Caco-2 (cell line): ENCODE measurements at regions of chr4 and their contacts with region 1.

Region 1: DNA sequence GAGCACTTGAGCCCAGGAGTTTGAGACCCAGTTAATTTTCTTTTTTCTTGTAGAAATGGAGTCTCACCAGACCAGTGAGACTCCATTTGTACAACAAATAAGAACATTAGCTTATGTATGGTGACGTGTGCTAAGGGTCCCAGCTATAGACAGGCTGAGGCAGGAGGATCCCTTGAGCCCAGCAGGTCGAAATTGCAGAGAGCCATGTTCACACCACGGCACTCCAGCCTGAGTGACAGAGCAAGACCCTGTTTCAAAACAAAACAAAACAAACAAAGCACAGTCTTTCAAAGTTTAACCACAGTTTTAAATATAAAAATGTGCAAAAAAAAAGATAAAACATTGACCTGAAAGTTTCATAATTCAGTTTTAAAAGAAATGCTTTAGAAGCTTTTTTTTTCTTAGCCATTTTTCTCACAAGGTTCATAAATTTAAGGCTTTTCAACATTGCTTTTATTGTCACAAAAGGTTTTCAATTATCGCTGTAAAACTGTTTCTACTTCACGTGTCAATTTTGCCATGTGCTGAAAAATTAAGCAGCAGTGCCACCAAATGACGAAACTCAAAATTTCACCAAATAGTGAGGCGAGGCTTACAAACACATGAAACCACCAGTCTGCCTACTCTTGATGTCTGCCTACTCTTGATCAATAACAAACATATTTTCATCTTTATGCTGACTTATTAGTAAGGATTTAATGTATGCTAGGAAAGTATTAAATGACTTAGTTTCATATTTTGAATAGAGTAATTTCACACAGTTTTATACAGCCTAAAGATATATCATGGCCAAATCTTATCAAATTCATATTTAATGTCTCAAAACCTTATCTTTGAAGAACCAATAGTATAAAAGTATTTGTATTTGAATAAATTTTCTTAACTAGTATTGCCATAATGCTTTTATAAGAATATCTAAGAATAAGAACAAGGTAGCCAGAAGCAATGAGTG is 126.3 kb downstream of the NEK1 start:
- DNase-seq: peak in 1 of 2 experiments; percentile 53
- H3K4me3 ChIP-seq: no peak overlapping the region
- H3K4me3 Mint-ChIP-seq: no peak overlapping the region
- H3K27ac Mint-ChIP-seq: no peak overlapping the region
- H3K4me1 ChIP-seq: 0 out of 2 replicates have a peak, but pooled peaks cover 4% of the 10 kb centered on the region
- H3K4me1 Mint-ChIP-seq: no peaks in the 10 kb centered on the region
- H3K27me3 ChIP-seq: no peaks in the 10 kb centered on the region
- H3K27me3 Mint-ChIP-seq: no peaks in the 10 kb centered on the region
- CTCF ChIP-seq: peak; percentile 34 to 42

Region 2: DNA sequence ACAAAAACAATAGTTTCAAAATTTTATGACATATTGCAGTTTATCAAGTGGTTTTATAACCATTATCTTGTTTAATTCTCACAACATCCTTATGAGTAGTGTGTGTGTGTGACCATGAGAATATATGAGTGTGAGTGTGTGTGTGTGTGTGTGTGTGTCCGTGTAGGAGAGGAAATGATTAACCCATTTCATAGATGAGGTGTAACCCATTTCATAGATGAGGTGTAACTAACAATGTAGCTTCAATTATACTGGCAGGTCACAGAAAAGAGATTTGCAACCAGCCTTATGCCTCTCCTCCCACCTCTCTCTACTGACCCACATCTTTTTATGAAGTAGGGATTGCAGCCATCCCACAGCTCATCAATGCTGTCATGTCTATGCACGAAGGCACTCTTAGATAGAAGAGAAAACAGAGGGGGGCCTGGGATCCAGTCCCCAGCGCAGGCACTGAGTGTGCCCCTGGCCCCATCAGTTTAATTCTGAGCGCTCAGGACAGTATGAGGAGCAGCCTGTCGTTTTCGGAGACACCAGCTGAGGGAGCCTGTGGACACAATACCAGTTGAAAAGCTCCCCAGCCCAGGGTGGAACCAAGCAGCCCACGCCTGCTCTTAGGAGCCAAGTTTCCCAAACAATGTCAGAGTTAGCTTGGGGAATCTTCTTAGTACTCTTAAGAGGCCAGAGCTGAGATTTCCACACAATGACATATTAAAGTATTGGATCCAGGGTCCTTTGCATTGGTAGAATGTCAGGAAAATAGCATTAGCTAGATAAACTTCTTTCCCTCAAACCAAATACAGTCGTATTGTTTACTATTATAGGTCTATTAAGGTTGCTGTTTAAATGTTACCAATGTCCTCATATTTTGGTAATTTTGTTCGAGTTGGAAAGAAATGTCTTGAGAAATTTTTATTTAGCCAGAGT is 900.6 kb before region 1 on chr4:
- CTCF ChIA-PET with region 1: no interaction called
- POLR2A ChIA-PET with region 1: no interaction called
- intact Hi-C with region 1: loop called (anchors 10 kb)
- DNase-seq: peak; percentile 63 to 67
- H3K4me3 ChIP-seq: no peak overlapping the region
- H3K4me3 Mint-ChIP-seq: no peak overlapping the region
- H3K27ac Mint-ChIP-seq: no peak overlapping the region
- H3K4me1 ChIP-seq: no peaks in the 10 kb centered on the region
- H3K4me1 Mint-ChIP-seq: no peaks in the 10 kb centered on the region
- H3K27me3 ChIP-seq: no peaks in the 10 kb centered on the region
- H3K27me3 Mint-ChIP-seq: no peaks in the 10 kb centered on the region
- CTCF ChIP-seq: peak; percentile 52 to 62

Region 3: GRCh38 chr4:169010125-169011023 is 475.7 kb before region 1 on chr4 and contains the start of gene CBR4:
- CTCF ChIA-PET with region 1: interaction called, 3 read pairs
- POLR2A ChIA-PET with region 1: no interaction called
- intact Hi-C with region 1: loop called (anchors 5 kb)
- DNase-seq: peak; percentile 94 to 97
- H3K4me3 ChIP-seq: peak within 1 kb of the TSS; percentile 65
- H3K4me3 Mint-ChIP-seq: peak within 1 kb of the TSS; percentile 91
- H3K27ac Mint-ChIP-seq: peak within 1 kb of the TSS; percentile 97
- H3K4me1 ChIP-seq: peaks cover 28% of the 10 kb centered on the region
- H3K4me1 Mint-ChIP-seq: peaks cover 16% of the 10 kb centered on the region
- H3K27me3 ChIP-seq: no peaks in the 10 kb centered on the region
- H3K27me3 Mint-ChIP-seq: no peaks in the 10 kb centered on the region
- CTCF ChIP-seq: peak; percentile 23 to 41
- total RNA-seq, gene CBR4: 21.4 and 22.5 TPM in 2 replicates

Region 4: DNA sequence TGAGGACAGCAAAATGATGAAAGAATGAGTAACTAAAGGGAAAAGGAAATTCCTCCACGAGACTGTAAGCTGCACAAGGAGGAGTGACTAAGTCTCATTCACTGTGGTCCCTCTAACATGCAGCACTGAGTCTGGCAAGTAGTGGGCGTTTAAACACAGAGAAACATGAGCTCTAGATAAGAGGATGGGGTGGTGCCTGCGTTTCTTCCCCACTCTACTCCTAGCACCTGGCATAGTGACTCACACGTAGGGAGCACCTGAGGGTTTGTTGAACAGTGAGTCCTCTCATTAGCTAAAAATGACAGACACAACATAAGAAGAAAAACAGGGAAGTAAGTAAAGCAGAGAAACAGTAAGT is 370.2 kb before region 1 on chr4:
- CTCF ChIA-PET with region 1: interaction called, 4 read pairs
- POLR2A ChIA-PET with region 1: no interaction called
- intact Hi-C with region 1: loop called (anchors 5 kb)
- DNase-seq: peak; percentile 29 to 52
- H3K4me3 ChIP-seq: no peak overlapping the region
- H3K4me3 Mint-ChIP-seq: no peak overlapping the region
- H3K27ac Mint-ChIP-seq: peak overlapping the region; percentile 37
- H3K4me1 ChIP-seq: peaks cover 7% of the 10 kb centered on the region; the same call in 1 of the 2 replicates
- H3K4me1 Mint-ChIP-seq: peaks cover 8% of the 10 kb centered on the region
- H3K27me3 ChIP-seq: no peaks in the 10 kb centered on the region
- H3K27me3 Mint-ChIP-seq: no peaks in the 10 kb centered on the region
- CTCF ChIP-seq: peak in 1 of 2 experiments; percentile 39

Region 5: DNA sequence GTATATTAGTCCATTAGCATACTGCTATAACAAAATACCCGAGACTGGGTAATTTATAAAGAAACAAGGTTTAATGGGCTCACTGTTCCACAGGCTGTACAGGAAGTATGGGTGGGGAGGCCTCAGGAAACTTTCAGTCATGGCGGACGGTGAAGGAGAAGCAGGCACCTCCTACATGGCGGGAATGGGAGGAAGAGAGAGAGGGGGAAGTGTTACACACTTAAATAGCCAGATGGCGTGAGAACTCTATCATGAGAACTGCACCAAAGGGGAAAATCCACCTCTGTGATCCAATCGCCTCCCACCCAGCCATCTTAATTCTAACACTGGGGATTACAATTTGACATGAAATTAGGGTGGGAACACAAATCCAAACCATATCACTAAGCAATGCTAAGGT is 116.4 kb before region 1 on chr4:
- CTCF ChIA-PET with region 1: no interaction called
- POLR2A ChIA-PET with region 1: no interaction called
- intact Hi-C with region 1: loop called (anchors 1 kb)
- DNase-seq: peak in 1 of 2 experiments; percentile 3
- H3K4me3 ChIP-seq: no peak overlapping the region
- H3K4me3 Mint-ChIP-seq: no peak overlapping the region
- H3K27ac Mint-ChIP-seq: no peak overlapping the region
- H3K4me1 ChIP-seq: no peaks in the 10 kb centered on the region
- H3K4me1 Mint-ChIP-seq: no peaks in the 10 kb centered on the region
- H3K27me3 ChIP-seq: no peaks in the 10 kb centered on the region
- H3K27me3 Mint-ChIP-seq: no peaks in the 10 kb centered on the region
- CTCF ChIP-seq: no peak

Region 6: GRCh38 chr4:169663831-169664230 is 177.8 kb after region 1 on chr4:
- CTCF ChIA-PET with region 1: no interaction called
- POLR2A ChIA-PET with region 1: no interaction called
- intact Hi-C with region 1: no loop called
- DNase-seq: no peak
- H3K4me3 ChIP-seq: no peak overlapping the region
- H3K4me3 Mint-ChIP-seq: no peak overlapping the region
- H3K27ac Mint-ChIP-seq: no peak overlapping the region
- H3K4me1 ChIP-seq: peaks cover 22% of the 10 kb centered on the region
- H3K4me1 Mint-ChIP-seq: peaks cover 19% of the 10 kb centered on the region
- H3K27me3 ChIP-seq: no peaks in the 10 kb centered on the region
- H3K27me3 Mint-ChIP-seq: no peaks in the 10 kb centered on the region
- CTCF ChIP-seq: no peak